ENCODE measurements at regions of chr9 and their contacts with region 1.

Region 1: DNA sequence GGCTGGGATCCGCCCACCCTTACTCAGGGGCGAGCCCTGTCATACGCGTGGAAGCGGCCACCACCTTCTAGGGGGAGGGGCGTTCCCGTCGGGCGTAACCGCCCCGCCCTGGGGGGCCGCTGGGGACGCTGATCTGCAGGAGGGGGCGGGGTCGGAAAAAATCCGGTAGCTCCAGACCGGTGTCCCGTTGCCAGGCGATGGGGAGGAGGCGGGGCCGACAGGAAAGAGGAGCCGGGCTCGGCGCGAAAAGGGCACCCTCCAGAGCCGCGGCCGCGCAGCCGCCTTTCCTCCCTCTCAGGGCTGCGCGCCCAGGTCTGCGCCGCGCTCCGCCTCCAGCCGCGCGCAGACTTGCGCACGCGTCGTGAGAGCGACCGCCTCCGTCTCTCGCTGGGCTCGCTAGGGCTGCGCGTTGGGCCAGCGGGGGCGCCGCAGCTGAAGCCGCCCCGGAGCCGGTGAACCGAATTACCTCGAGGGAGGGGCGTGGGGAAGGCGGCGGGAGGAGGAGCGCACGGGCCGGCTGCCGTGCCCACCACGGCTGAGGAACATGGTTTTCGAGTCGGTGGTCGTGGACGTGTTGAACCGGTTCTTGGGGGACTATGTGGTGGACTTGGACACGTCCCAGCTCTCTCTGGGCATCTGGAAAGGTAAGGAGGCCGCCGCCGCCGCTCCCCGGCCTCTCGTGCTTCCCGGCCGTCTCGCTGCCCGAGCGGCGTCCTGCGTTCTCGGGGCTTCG is at the start of gene VPS13A:
- DNase-seq: peak; percentile 75 to 97 (median 86)
- ATAC-seq: peak; percentile 84
- H3K4me3 ChIP-seq: peak within 1 kb of the TSS; percentile 97
- H3K4me3 Mint-ChIP-seq: peak within 1 kb of the TSS; percentile 91
- H3K27ac ChIP-seq: peak within 1 kb of the TSS; percentile 79
- H3K27ac Mint-ChIP-seq: peak within 1 kb of the TSS; percentile 89
- H3K4me1 ChIP-seq: peaks cover 17% of the 10 kb centered on the region
- H3K4me1 Mint-ChIP-seq: peaks cover 41% of the 10 kb centered on the region
- H3K27me3 ChIP-seq: no peaks in the 10 kb centered on the region
- H3K27me3 Mint-ChIP-seq: no peaks in the 10 kb centered on the region
- CTCF ChIP-seq: peak; percentile 40
- total RNA-seq, gene VPS13A: 37.3 to 41.1 TPM

Region 2: DNA sequence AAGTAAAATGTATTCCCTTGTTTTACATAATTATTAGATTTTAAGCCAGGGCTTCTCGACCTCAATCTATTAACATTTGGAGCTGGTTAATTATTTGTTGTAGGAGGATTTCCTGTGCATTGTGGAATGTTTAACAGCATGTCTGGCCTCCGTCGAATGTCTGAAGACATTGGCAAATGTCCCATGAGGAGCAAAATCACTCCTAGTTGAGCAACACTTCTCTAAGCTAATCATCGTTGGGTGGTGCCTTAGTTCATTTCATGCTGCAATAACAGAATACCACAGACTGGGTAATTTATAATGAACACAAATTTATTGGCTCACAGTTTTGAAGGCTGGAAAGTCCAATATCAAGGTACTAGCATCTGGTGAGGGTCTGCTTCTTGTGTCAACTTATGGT is 13.4 kb before region 1 on chr9:
- CTCF ChIA-PET with region 1: interaction called, 22 read pairs
- POLR2A ChIA-PET with region 1: interaction called, 10 read pairs
- intact Hi-C with region 1: loop called in 1 of 2 experiments (anchors 1 kb)
- DNase-seq: no peak
- ATAC-seq: no peak
- H3K4me3 ChIP-seq: no peak overlapping the region
- H3K4me3 Mint-ChIP-seq: no peak overlapping the region
- H3K27ac ChIP-seq: no peak overlapping the region
- H3K27ac Mint-ChIP-seq: no peak overlapping the region
- H3K4me1 ChIP-seq: no peaks in the 10 kb centered on the region
- H3K4me1 Mint-ChIP-seq: no peaks in the 10 kb centered on the region
- H3K27me3 ChIP-seq: peaks cover 0 to 4% of the 10 kb centered on the region in 2 experiments
- H3K27me3 Mint-ChIP-seq: peaks cover 14% of the 10 kb centered on the region
- CTCF ChIP-seq: no peak

Region 3: DNA sequence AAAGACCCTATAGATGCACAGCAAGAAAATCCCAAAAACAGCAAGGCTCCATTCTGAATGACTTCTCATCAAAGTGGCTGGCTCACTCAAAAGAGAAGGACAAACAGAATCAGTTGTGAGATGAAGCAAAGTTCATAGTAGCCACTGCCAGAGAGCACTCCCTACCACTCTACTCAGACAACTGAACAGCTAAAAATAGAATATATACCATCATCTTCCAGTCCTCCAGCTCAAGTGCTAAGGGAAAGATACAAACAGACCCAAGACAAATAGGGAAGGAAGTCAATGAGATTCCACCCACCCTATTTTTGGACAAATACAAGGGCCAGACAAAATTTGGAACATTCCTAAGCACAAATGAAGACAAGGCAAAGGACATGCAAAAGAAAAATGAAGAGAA is 833.7 kb after region 1 on chr9:
- CTCF ChIA-PET with region 1: no interaction called
- POLR2A ChIA-PET with region 1: no interaction called
- intact Hi-C with region 1: loop called in 1 of 2 experiments (anchors 10 kb)
- DNase-seq: no peak
- ATAC-seq: no peak
- H3K4me3 ChIP-seq: no peak overlapping the region
- H3K4me3 Mint-ChIP-seq: peak overlapping the region; percentile 49
- H3K27ac ChIP-seq: peak overlapping the region in 1 of 2 donors; percentile 7
- H3K27ac Mint-ChIP-seq: peak overlapping the region; percentile 56
- H3K4me1 ChIP-seq: peaks cover 17% of the 10 kb centered on the region
- H3K4me1 Mint-ChIP-seq: peaks cover 75% of the 10 kb centered on the region
- H3K27me3 ChIP-seq: no peaks in the 10 kb centered on the region
- H3K27me3 Mint-ChIP-seq: no peaks in the 10 kb centered on the region
- CTCF ChIP-seq: no peak

Region 4: GRCh38 chr9:78291240-78291925 is 1114.1 kb after region 1 on chr9:
- CTCF ChIA-PET with region 1: no interaction called
- POLR2A ChIA-PET with region 1: interaction called, 10 read pairs
- intact Hi-C with region 1: loop called in 1 of 2 experiments (anchors 5 kb)
- DNase-seq: no peak
- ATAC-seq: no peak
- H3K4me3 ChIP-seq: no peak overlapping the region
- H3K4me3 Mint-ChIP-seq: no peak overlapping the region
- H3K27ac ChIP-seq: no peak overlapping the region
- H3K27ac Mint-ChIP-seq: no peak overlapping the region
- H3K4me1 ChIP-seq: peaks cover 8% of the 10 kb centered on the region
- H3K4me1 Mint-ChIP-seq: peaks cover 12% of the 10 kb centered on the region
- H3K27me3 ChIP-seq: no peaks in the 10 kb centered on the region
- H3K27me3 Mint-ChIP-seq: no peaks in the 10 kb centered on the region
- CTCF ChIP-seq: no peak

Measured in CD4-positive, alpha-beta T cell (primary cell).